ENCODE measurements at regions of chr10 and their contacts with region 1.

Region 1: DNA sequence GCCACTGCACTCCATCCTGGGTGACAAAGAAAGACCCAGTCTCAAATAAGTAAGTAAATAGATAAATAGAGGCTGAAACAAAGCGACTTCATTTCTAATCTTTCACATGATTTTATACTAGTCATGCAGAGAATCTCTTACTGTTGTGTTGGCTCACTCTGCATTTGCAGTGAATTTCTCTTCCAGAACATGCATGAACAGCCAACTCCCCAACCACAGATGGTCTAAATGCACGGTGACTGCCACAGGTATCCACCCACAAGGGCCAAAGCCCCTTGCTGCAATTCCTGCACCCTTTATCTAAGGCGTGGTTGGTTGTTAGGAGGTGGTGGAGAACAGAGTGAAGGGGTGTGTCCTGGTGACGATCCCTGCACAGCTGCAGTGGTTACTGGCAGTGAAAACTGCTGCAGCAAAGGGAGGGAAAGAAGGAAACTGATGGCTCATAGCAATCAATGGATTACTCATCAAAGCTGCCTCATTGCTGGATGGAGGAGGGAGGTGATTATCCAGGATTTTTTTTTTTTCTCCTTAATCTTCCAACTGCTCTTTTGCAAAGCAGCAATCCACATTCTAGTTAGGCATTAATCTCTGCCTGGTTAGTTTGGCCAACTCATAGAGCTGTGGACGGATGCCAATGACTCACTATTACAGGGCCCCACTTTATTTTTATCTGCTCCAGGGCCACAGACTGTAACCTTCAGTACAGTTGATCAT is 50.6 kb downstream of the PRTFDC1 start:
- DNase-seq: no peak
- ATAC-seq: no peak
- H3K4me3 Mint-ChIP-seq: peak overlapping the region; percentile 41
- H3K27ac Mint-ChIP-seq: peak overlapping the region; percentile 75
- H3K4me1 Mint-ChIP-seq: peaks cover 26% of the 10 kb centered on the region
- H3K27me3 Mint-ChIP-seq: no peaks in the 10 kb centered on the region
- CTCF ChIP-seq: no peak

Region 2: DNA sequence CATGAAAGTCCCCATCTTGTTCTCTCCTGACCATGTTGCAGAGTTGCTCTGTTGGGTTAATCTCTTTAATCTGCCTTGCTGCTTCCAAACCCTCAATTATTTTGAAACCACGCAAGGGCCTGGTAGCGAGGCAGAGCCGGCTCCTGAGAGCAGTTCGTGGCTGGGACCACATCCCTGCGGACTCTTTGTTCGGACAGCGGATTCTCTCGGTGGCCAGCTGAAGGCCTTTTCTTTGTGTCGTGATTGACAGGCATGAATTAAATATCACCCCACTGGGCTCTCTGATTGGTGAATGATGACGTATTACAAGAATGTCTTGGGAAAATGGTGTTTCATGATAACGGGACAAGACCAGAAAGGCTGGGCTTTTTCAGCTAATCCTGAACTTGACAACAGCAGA is 111.2 kb before region 1 on chr10:
- CTCF ChIA-PET with region 1: no interaction called
- POLR2A ChIA-PET with region 1: no interaction called
- intact Hi-C with region 1: no loop called
- DNase-seq: no peak
- ATAC-seq: no peak
- H3K4me3 Mint-ChIP-seq: no peak overlapping the region
- H3K27ac Mint-ChIP-seq: no peak overlapping the region
- H3K4me1 Mint-ChIP-seq: no peaks in the 10 kb centered on the region
- H3K27me3 Mint-ChIP-seq: no peaks in the 10 kb centered on the region
- CTCF ChIP-seq: no peak

Region 3: DNA sequence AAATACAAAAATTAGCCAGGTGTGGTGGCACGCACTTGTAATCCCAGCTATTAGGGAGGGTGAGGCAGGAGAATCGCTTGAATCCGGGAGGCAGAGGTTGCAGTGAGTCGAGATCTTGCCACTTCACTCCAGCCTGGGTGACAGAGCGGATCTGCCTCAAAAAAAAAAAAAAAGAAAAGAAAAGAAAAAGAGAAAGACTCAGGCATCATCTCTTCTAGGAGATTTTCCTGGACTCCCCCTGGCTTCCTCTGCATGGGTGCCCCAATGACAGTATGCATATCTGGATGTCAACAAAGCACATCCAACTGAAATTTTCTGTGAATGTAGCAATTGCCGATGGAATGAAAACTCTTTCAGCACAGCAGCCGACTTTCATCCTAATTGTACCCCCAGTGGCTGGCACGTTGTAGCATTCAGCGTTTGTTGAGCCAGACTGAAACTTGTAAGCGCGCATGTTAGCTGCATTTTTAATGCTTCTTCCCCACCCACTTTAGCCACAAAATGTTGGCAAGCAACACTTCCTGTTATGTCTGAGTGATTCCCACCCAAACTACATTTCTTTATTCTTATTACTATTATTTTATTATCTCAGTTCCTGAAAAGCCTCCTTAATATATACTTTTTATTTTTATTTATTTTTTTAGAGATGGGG is 19.7 kb before region 1 on chr10:
- CTCF ChIA-PET with region 1: no interaction called
- POLR2A ChIA-PET with region 1: interaction called, 3 read pairs
- intact Hi-C with region 1: loop called (anchors 1 kb)
- DNase-seq: no peak
- ATAC-seq: peak; percentile 61
- H3K4me3 Mint-ChIP-seq: peak overlapping the region; percentile 21
- H3K27ac Mint-ChIP-seq: no peak overlapping the region
- H3K4me1 Mint-ChIP-seq: peaks cover 27% of the 10 kb centered on the region
- H3K27me3 Mint-ChIP-seq: no peaks in the 10 kb centered on the region
- CTCF ChIP-seq: no peak

Region 4: GRCh38 chr10:24887855-24888231 is 14.0 kb before region 1 on chr10:
- CTCF ChIA-PET with region 1: no interaction called
- POLR2A ChIA-PET with region 1: interaction called, 3 read pairs
- intact Hi-C with region 1: loop called (anchors 1 kb)
- DNase-seq: no peak
- ATAC-seq: peak; percentile 15
- H3K4me3 Mint-ChIP-seq: peak overlapping the region; percentile 61
- H3K27ac Mint-ChIP-seq: peak overlapping the region; percentile 93
- H3K4me1 Mint-ChIP-seq: peaks cover 34% of the 10 kb centered on the region
- H3K27me3 Mint-ChIP-seq: no peaks in the 10 kb centered on the region
- CTCF ChIP-seq: no peak

Region 5: DNA sequence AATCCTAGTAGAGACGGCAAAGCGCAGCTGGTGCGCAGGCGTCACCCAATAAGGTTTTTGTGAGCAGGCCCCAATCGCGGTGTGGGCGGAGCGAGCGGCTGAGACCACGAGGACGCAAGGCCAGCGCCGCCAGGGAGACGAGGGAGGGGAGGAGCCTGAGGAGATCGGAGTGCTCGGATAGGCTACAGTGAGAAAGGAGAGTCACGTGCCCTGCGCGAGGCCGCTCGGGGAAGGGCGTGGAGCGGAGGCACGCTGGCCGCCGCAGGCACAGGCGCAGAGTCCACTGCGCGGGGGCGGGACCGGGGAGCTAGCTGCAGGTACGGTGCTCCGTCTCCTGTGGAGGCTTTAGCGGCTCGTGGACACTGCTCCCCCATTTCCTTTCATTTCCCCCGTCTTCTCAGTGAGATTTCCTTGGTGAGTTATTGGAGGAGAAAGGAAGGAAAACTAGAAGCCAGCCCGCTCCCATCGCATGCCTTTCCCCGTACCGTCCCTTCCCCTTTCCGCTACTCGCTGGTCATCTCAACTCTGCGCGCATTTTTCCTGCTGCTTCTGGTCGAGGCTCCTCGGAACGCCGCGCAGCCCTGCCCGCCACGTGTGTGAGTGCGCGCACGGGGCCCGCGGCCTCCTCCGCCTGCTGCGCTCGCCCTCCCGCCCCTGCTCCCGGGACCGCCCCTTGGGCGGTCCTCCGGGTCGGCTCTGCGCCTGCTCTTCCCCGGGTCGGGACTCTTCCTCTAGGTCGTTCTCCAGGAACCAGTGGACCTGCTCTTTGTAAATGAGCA is 114.7 kb after region 1 on chr10 and contains the start of gene THNSL1:
- CTCF ChIA-PET with region 1: no interaction called
- POLR2A ChIA-PET with region 1: no interaction called
- intact Hi-C with region 1: loop called (anchors 5 kb)
- DNase-seq: peak; percentile 85
- ATAC-seq: peak; percentile 95
- H3K4me3 Mint-ChIP-seq: peak within 1 kb of the TSS; percentile 88
- H3K27ac Mint-ChIP-seq: peak within 1 kb of the TSS; percentile 93
- H3K4me1 Mint-ChIP-seq: peaks cover 27% of the 10 kb centered on the region
- H3K27me3 Mint-ChIP-seq: no peaks in the 10 kb centered on the region
- CTCF ChIP-seq: no peak
- total RNA-seq, gene THNSL1: 3.8 TPM in 2 replicates

Measured in activated B cell treated with CpG ODN at 0.5 μM for 24 hours (primary cell).